Sigmoid colon (tissue), 7 donors: ENCODE measurements at regions of chrX and their contacts with region 1.

Region 1: GRCh38 chrX:19904778-19905367 is 17.5 kb upstream of the SH3KBP1 start:
- DNase-seq: no peak
- H3K4me3 ChIP-seq: no peak overlapping the region
- H3K27ac ChIP-seq: no peak overlapping the region
- H3K4me1 ChIP-seq: no peaks in the 10 kb centered on the region
- H3K27me3 ChIP-seq: no peaks in the 10 kb centered on the region
- CTCF ChIP-seq: peak in 3 of 4 experiments; percentile 28 to 51 (median 30)
- EP300 ChIP-seq: no peak
- POLR2A ChIP-seq: no peak

Region 2: GRCh38 chrX:19698125-19698524 is 206.7 kb before region 1 on chrX:
- intact Hi-C with region 1: no loop called
- DNase-seq: no peak
- H3K4me3 ChIP-seq: no peak overlapping the region
- H3K27ac ChIP-seq: no peak overlapping the region
- H3K4me1 ChIP-seq: no peaks in the 10 kb centered on the region
- H3K27me3 ChIP-seq: no peaks in the 10 kb centered on the region
- CTCF ChIP-seq: no peak
- EP300 ChIP-seq: no peak
- POLR2A ChIP-seq: no peak

Region 3: DNA sequence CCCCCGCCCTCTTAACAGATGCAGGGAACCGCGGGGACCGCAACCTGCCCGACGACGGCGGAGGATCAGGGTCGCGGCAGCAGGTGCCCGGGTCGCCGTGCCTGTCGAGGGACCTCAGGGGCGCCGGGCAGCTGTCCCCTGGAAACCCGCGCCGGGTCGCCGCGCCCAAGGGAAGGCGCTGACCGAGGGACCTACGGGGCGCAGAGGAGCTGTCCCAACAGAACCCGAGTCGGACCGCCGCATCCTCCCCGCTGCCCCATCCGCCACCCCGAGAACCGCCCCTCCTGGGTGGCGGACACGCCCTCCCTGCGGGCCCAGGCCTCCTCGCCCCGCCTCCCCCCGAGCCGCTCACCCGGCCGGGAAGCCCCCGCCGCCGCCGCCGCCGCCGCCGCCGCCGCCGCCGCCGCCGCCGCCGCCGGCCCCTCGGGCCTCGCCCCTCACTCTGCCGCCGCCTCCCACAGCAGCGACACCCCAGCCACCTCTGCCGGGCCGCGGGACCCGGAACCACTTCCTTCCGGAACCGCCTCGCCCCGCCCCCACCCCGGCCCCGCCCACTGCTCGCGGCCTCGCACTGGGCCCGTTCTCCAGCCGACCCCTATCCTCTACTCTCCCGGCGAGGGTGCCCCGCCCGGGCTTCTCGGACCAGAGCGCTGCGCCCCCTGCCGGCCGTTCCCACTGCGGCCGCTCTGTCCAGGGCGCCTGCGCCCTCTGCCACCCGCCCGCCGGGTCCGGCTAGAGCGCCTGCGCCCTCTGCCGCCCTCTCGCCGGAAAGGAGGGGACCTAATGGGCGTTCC is 85.9 kb after region 1 on chrX and contains the start of gene BCLAF3:
- intact Hi-C with region 1: loop called (anchors 1 kb)
- DNase-seq: peak; percentile 93
- H3K4me3 ChIP-seq: peak within 1 kb of the TSS; percentile 65 to 82 (median 75)
- H3K27ac ChIP-seq: peak within 1 kb of the TSS; percentile 77 to 82 (median 78)
- H3K4me1 ChIP-seq: no peaks in the 10 kb centered on the region
- H3K27me3 ChIP-seq: no peaks in the 10 kb centered on the region
- CTCF ChIP-seq: peak; percentile 35 to 71 (median 56)
- EP300 ChIP-seq: no peak
- POLR2A ChIP-seq: no peak
- total RNA-seq, gene BCLAF3: 7.9 to 16.3 (median 9.8) TPM

Region 4: DNA sequence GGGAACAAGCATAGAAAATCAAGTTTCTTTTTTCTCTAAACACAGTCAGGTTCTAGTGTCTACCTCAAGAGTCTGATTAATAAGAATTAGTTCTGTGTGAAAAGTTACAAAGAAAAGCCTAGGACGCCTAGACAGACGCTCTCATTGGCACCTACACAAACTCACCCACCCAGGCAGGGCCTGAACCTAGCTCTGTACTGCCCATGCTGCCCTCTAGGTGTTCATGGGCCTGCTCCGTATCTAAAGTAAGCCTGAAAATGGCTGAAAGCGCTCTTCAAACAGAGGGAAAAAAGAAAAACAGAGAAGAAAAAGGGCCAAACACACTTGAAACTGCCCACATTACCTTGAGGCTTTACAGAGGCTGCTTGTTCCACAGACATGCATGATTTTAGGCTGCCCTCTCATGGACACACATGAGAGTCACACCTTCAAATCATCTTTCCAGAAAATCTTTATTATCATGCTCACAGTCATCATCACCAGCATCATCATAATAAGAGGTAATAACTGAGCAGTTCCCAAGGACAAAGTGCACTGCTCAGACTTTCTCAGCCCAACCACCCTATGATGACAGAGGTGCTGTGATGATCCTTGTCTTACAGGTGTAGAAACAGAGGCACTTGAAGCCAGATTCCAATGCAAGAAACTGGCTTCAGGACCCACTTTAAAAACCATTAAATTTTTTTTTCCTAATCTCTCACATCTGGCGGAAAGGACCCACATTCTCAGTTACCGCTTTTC is 162.3 kb after region 1 on chrX:
- intact Hi-C with region 1: loop called (anchors 5 kb)
- DNase-seq: no peak
- H3K4me3 ChIP-seq: no peak overlapping the region
- H3K27ac ChIP-seq: peak overlapping the region in 1 of 4 donors; percentile 27
- H3K4me1 ChIP-seq: peaks cover 0 to 13% (median 6%) of the 10 kb centered on the region in 4 donors
- H3K27me3 ChIP-seq: no peaks in the 10 kb centered on the region
- CTCF ChIP-seq: peak in 3 of 4 experiments; percentile 5 to 15 (median 10)
- EP300 ChIP-seq: no peak
- POLR2A ChIP-seq: no peak